Motor neuron (in vitro differentiated cells): ENCODE measurements at regions of chr6 and their contacts with region 1.

Region 1: DNA sequence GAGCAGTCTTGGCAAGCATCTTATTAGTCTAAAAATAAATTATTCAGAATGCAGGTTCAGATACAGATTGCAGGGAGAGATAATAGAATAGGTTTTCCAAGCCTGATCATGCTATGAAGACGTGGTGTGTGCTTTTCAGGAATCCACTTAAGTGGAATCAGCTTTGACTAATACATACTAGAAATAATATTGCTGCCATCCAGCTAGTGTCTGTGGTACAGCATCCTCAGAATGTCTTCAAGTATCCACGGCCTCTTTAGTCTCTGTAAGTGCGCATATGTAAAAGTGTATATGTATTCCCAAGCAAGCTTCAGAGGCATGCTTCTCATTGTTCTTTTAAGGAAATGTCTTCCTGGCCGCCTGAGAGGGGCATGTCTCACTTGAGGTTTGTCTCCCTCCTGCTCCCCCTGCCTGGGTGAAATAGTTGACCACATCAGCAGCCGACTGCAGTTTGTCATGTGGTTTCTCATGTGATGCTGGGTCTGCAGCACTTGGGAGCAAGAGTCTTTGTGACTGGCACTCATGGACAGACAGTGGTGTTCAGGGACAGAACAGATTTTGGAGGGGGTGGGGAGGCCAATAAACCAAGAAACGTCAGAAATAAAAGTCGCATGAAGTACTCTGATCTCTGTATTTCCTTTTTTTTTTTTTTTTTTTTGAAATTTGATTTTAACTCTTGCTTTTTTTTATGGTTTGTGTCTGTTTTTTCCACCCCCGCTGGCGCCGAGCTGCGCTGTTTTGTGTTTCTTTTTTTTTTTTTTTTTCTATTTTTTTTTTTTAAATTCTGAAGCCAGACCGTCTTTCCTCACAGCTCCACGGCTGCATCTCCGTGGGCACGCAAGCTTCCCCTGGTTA is 150.8 kb downstream of the PRL start:
- ATAC-seq: peak; percentile 25 to 63 (median 50)
- H3K4me3 ChIP-seq: peak overlapping the region in 2 of 5 donors; percentile 0 to 4
- H3K27ac ChIP-seq: peak overlapping the region; percentile 60 to 90
- H3K4me1 ChIP-seq: peaks cover 65 to 79% of the 10 kb centered on the region in 2 donors

Region 2: GRCh38 chr6:20564269-20564668 is 1581.8 kb before region 1 on chr6:
- in situ Hi-C with region 1: loop called in 1 of 9 experiments (anchors 25 kb)
- ATAC-seq: no peak
- H3K4me3 ChIP-seq: no peak overlapping the region
- H3K27ac ChIP-seq: no peak overlapping the region
- H3K4me1 ChIP-seq: peaks cover 10 to 43% of the 10 kb centered on the region in 2 donors

Region 3: DNA sequence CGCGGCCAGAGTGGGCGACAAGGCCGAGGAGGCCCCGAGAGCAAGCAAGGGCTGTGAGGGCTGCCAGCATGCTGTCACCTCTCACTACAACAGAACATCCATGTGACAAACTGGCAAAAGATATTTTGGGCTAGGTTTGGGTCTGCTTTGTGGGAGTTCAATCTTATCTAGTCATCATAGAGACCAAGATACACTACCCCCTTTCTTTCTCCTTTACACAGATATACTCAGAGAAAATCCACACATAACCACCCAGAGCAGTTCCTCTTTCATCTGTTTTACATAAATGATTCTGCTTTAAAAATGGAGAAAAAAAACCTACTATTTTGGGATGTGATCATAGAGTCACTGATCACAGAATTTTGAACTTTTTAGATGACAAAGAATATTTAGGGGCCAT is 535.7 kb before region 1 on chr6:
- in situ Hi-C with region 1: loop called in 2 of 9 experiments (anchors 25 kb)
- ATAC-seq: no peak
- H3K4me3 ChIP-seq: no peak overlapping the region
- H3K27ac ChIP-seq: no peak overlapping the region
- H3K4me1 ChIP-seq: no peaks in the 10 kb centered on the region